ENCODE measurements at regions of chr3 and their contacts with region 1.

Region 1: GRCh38 chr3:12868039-12869034 is 27.0 kb upstream of the RPL32 start:
- DNase-seq: peak; percentile 73
- ATAC-seq: peak; percentile 72
- H3K4me3 Mint-ChIP-seq: peak overlapping the region; percentile 62
- H3K27ac Mint-ChIP-seq: no peak overlapping the region
- H3K4me1 Mint-ChIP-seq: peaks cover 21% of the 10 kb centered on the region
- H3K27me3 Mint-ChIP-seq: peaks cover 18% of the 10 kb centered on the region

Region 2: DNA sequence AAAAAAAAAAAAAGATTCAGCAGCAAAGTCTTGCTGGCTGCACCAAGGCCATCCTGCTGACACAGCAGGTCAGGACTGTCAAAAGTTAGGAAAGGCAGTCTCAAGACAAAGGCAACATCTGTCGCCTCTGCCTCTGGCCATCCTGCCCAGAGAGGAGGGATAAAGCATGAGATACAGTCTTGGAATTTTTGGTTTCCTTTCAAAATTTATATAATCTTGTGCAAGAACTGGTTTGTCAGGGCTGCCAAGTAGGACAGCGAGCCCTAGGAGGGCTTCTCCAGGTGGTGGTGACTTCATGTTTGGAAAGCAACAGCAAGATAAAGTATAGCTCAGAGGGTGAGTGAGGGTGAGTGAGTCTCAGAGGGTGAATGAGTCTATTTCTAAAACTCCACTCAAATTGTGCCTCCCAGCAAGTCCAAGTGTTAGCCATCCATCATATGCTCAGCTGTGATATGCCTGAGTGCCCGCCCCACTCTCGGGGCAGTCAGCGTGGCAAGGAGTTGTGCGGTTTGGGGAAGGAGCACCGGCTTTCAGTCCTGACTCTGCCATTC is 15.1 kb before region 1 on chr3:
- CTCF ChIA-PET with region 1: interaction called, 10 read pairs
- DNase-seq: no peak
- ATAC-seq: no peak
- H3K4me3 Mint-ChIP-seq: no peak overlapping the region
- H3K27ac Mint-ChIP-seq: no peak overlapping the region
- H3K4me1 Mint-ChIP-seq: no peaks in the 10 kb centered on the region
- H3K27me3 Mint-ChIP-seq: peaks cover 25% of the 10 kb centered on the region

Region 3: GRCh38 chr3:12891985-12892839 is 23.9 kb after region 1 on chr3:
- CTCF ChIA-PET with region 1: interaction called, 88 read pairs
- DNase-seq: peak; percentile 56
- ATAC-seq: peak; percentile 59
- H3K4me3 Mint-ChIP-seq: no peak overlapping the region
- H3K27ac Mint-ChIP-seq: no peak overlapping the region
- H3K4me1 Mint-ChIP-seq: peaks cover 14% of the 10 kb centered on the region
- H3K27me3 Mint-ChIP-seq: peaks cover 45% of the 10 kb centered on the region